Kidney (tissue), 22 donors: ENCODE measurements at regions of chr5 and their contacts with region 1.

Region 1: DNA sequence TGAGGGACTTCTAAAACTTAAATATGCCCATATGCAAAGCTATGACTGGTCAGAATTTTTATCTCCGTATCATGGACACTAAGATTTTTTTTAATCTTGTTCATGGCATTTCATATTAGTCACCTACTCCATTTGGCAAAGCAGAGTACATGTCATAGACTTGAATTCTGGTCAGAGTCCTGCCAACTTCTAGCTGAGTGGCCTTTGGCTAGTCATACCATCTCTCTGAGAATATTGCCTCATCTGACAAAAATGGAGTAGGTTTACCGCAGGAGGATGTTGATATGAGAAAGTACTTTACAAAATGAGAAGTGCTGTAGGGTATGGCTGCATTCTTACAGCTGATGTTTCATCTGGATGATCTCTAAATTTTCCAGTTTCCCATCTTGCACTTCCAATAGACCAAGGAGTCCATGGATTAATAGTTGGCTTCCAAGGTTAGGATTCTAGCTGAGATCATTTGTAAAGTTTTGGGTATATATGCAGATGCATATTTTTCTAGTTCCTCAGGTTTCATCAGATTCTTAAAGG is 150.8 kb upstream of the NR3C1 start:
- DNase-seq: no peak
- H3K4me3 ChIP-seq: no peak overlapping the region
- H3K27ac ChIP-seq: no peak overlapping the region
- H3K4me1 ChIP-seq: no peaks in the 10 kb centered on the region
- H3K27me3 ChIP-seq: no peaks in the 10 kb centered on the region
- CTCF ChIP-seq: no peak

Region 2: GRCh38 chr5:143471041-143471521 is 83.2 kb before region 1 on chr5:
- intact Hi-C with region 1: no loop called
- DNase-seq: no peak
- H3K4me3 ChIP-seq: no peak overlapping the region
- H3K27ac ChIP-seq: no peak overlapping the region
- H3K4me1 ChIP-seq: no peaks in the 10 kb centered on the region
- H3K27me3 ChIP-seq: no peaks in the 10 kb centered on the region
- CTCF ChIP-seq: no peak

Region 3: DNA sequence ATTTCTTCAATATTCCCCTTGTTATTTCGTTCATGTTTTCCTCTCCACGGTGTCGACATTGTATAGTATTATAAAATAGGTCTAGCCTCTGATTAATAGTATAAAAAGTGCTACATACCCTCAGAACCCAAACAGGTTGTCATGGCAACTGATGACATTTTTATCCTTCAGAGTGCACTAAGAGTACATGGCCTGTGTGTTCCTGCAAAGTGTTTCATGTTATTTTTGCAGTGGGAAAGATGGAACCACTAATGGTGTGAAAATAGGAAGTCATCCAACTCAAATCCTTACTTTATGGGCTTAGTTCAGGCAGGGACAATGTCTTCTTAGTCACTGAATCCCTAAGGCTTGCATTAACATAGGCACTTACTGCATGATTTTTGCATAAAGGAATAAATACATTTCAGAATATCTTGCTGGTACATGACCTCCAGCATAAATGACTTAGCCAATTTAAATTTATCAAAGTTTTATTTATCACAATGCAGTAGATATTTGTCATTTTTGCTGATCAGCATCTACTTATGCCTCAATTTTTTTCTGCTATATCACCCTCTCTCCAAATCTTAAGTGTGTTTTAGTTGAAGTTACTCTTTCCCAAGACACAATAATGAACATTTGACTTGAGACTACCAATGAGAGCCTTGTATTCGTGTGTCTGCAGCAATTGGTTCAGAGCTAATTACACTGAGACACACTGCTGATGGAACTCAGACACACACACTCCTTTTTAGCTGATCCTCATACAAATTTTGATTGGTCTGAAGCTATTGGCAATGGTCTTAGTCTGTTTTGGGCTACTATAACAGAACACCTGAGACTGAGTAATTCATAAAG is 860.2 kb after region 1 on chr5:
- intact Hi-C with region 1: loop called (anchors 5 kb)
- DNase-seq: no peak
- H3K4me3 ChIP-seq: no peak overlapping the region
- H3K27ac ChIP-seq: no peak overlapping the region
- H3K4me1 ChIP-seq: no peaks in the 10 kb centered on the region
- H3K27me3 ChIP-seq: no peaks in the 10 kb centered on the region
- CTCF ChIP-seq: no peak